Activated CD4-positive, alpha-beta memory T cell treated with anti-CD3 and anti-CD28 coated beads for 36 hours (primary cell): ENCODE measurements at regions of chr9 and their contacts with region 1.

Region 1: DNA sequence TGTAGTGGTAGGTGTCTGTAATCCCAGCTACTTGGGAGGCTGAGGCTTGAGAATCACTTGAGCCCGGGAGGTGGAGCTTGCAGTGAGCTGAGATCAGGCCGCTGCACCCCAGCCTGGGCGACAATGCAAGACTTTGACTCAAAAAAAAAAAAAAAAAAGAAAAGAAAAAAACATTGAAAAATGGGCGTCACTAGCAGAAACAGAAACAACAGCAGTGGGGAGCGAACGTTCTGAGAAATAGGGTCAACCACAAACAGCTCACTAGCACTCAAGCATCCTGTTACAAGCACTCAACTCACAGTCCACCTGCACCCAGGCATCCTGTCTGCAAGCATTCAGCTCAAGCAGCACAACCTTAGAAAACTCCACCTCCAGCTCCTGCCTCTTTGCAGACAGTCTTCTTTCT is 17.2 kb downstream of the TRIM14 start:
- DNase-seq: peak; percentile 89
- H3K4me3 Mint-ChIP-seq: peak overlapping the region; percentile 66
- H3K27ac Mint-ChIP-seq: peak overlapping the region; percentile 95
- H3K4me1 Mint-ChIP-seq: peaks cover 88% of the 10 kb centered on the region
- H3K27me3 Mint-ChIP-seq: no peaks in the 10 kb centered on the region

Region 2: DNA sequence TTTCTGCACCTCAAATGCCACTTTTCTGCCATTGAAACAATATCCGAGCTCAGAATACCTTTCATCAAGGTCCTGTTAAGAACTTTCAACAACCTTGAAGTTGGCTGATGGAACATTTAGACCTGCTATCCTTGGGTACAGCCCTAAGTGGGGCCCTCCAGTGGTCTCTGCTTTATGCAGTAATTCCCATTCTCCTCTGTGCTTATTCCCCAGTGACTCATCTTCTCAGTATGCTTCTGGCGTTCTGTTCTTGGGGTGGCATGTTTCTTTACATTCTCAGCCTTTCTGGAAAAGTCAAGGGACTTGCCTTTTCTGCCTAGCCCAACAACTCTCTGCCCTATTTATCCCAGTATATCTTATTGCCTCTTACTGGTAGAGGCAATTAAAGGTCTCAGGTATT is 111.6 kb before region 1 on chr9:
- CTCF ChIA-PET with region 1: no interaction called
- POLR2A ChIA-PET with region 1: no interaction called
- intact Hi-C with region 1: no loop called
- DNase-seq: no peak
- H3K4me3 Mint-ChIP-seq: no peak overlapping the region
- H3K27ac Mint-ChIP-seq: peak overlapping the region; percentile 24
- H3K4me1 Mint-ChIP-seq: peaks cover 80% of the 10 kb centered on the region
- H3K27me3 Mint-ChIP-seq: no peaks in the 10 kb centered on the region

Region 3: DNA sequence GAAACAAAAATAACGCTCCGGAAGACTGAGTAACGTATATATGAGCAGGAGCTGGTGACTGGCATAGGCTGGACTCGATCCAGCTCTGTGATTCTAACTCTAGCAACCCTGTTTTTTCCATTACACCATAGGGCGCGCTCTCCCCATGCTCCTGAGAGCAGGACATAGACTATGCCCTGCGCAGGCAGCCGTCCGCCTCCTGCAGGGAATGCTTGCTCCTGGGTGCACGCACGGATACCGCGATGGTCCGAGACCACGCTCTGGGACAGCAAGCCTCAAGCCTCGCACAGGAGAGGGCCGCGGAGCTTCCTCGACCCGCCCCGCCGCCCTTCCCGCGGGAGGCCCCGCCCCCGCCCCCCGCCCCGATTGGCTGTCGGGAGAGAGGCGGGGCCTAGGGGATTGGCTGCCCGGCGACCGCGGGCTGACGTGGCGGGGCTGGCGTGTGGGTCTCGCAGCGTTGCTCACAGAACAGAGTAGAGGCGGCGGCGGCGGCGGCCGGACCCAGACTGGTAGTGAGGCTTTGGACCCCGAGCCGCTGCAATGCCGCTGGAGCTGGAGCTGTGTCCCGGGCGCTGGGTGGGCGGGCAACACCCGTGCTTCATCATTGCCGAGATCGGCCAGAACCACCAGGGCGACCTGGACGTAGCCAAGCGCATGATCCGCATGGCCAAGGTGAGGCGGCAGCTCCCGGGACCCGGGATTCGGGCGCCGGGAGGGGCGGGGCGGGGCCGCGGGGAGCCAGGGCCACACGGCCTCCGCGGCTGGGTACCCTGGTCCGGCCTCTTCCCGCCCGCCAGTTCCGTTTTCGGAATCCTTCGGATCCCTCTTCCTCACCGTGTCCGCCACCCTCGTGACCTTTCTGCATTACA is 45.4 kb before region 1 on chr9 and contains the start of gene NANS:
- CTCF ChIA-PET with region 1: no interaction called
- POLR2A ChIA-PET with region 1: interaction called, 5 read pairs
- intact Hi-C with region 1: loop called (anchors 2 kb)
- DNase-seq: peak; percentile 95
- H3K4me3 Mint-ChIP-seq: peak within 1 kb of the TSS; percentile 92
- H3K27ac Mint-ChIP-seq: peak within 1 kb of the TSS; percentile 91
- H3K4me1 Mint-ChIP-seq: peaks cover 19% of the 10 kb centered on the region
- H3K27me3 Mint-ChIP-seq: no peaks in the 10 kb centered on the region
- total RNA-seq, gene NANS: 48.4 to 51.9 TPM

Region 4: DNA sequence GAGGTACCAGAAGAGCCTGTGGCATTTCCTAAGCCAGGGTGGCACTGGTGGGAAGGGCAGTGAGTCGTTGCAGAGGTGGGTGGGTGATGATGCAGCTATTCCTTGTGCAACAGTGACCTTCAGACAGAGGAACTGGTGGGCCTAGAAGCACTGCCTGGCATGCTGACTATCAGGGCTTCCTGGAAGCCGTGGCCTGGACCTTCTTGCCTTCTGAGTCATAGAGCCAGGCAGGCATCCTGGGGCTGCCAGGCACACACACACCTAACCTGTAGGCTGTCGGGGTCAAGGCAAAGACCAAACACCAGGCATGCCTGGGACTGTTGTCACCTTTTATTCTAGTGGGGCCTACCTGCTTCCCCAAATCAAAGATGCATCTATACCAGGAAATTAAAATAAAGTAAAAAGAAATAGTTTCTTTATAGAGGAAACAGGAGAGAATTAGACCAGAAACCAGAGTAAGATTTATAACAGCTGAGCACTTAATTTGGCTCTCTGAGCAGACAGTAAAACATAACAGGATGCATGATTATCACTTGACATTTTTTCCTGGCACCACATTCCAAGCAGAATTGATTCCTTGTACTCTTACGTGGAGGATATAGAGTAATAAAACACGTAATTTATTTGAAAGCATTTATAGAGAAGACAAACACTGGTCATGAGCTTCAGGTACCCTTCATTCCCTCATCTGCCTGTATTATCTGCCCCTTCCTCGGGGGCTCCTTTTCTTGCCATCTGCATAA is 20.2 kb before region 1 on chr9:
- CTCF ChIA-PET with region 1: interaction called, 7 read pairs
- POLR2A ChIA-PET with region 1: interaction called, 7 read pairs
- intact Hi-C with region 1: loop called (anchors 1 kb)
- DNase-seq: peak; percentile 81
- H3K4me3 Mint-ChIP-seq: no peak overlapping the region
- H3K27ac Mint-ChIP-seq: peak overlapping the region; percentile 91
- H3K4me1 Mint-ChIP-seq: peaks cover 46% of the 10 kb centered on the region
- H3K27me3 Mint-ChIP-seq: no peaks in the 10 kb centered on the region

Region 5: GRCh38 chr9:98709968-98710965 is 608.4 kb after region 1 on chr9:
- CTCF ChIA-PET with region 1: no interaction called
- POLR2A ChIA-PET with region 1: no interaction called
- intact Hi-C with region 1: no loop called
- DNase-seq: no peak
- H3K4me3 Mint-ChIP-seq: no peak overlapping the region
- H3K27ac Mint-ChIP-seq: no peak overlapping the region
- H3K4me1 Mint-ChIP-seq: peaks cover 1% of the 10 kb centered on the region
- H3K27me3 Mint-ChIP-seq: peaks cover 48% of the 10 kb centered on the region